Activated CD4-positive, alpha-beta memory T cell treated with anti-CD3 and anti-CD28 coated beads, Interleukin-2, amount 10 ng/mL, durations not matched to agents 7 days and 5 days (primary cell): ENCODE measurements at regions of chr18 and their contacts with region 1.

Region 1: GRCh38 chr18:13611601-13612195 is 114.7 kb downstream of the FAM210A start:
- DNase-seq: peak; percentile 32
- H3K4me3 Mint-ChIP-seq: peak overlapping the region; percentile 69
- H3K27ac Mint-ChIP-seq: peak overlapping the region; percentile 96
- H3K4me1 Mint-ChIP-seq: peaks cover 92% of the 10 kb centered on the region
- H3K27me3 Mint-ChIP-seq: no peaks in the 10 kb centered on the region

Region 2: GRCh38 chr18:13216092-13216582 is 395.6 kb before region 1 on chr18:
- CTCF ChIA-PET with region 1: interaction called, 11 read pairs
- POLR2A ChIA-PET with region 1: interaction called, 3 read pairs
- DNase-seq: peak; percentile 60
- H3K4me3 Mint-ChIP-seq: peak overlapping the region; percentile 71
- H3K27ac Mint-ChIP-seq: peak overlapping the region; percentile 14
- H3K4me1 Mint-ChIP-seq: peaks cover 20% of the 10 kb centered on the region
- H3K27me3 Mint-ChIP-seq: peaks cover 56% of the 10 kb centered on the region

Region 3: GRCh38 chr18:13558124-13558523 is 53.6 kb before region 1 on chr18:
- CTCF ChIA-PET with region 1: interaction called, 31 read pairs
- POLR2A ChIA-PET with region 1: interaction called, 14 read pairs
- DNase-seq: peak; percentile 33
- H3K4me3 Mint-ChIP-seq: no peak overlapping the region
- H3K27ac Mint-ChIP-seq: no peak overlapping the region
- H3K4me1 Mint-ChIP-seq: peaks cover 22% of the 10 kb centered on the region
- H3K27me3 Mint-ChIP-seq: no peaks in the 10 kb centered on the region

Region 4: DNA sequence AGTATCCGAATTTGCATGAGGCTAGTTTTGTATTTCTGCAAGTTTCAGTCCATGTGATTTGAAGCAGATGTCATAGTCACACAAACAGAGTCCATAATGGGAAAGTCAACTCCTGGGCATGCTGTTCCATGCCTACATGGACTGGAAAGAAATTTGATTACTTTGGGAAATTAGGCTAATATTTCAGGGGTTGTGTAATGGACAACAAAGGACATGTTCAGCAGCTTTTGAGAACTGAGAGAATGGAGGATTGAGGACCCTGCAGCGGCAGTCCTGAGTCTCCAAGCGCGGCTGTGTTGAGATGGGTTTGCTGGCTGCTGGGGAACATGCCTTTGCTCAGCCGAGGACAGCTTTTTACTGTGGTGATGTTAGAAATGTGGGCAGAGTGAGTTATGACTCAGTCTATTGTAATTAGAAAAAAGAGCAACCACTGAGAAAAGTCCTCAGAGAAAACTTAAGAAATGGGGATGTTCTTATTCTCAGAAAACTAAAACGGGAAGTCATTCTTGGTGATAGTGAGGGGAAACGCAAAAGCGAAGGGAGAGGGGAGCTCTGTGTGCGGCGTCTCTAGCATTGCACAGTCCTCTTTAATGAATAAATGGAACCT is 34.5 kb before region 1 on chr18:
- CTCF ChIA-PET with region 1: interaction called, 21 read pairs
- POLR2A ChIA-PET with region 1: interaction called, 76 read pairs
- DNase-seq: peak; percentile 58
- H3K4me3 Mint-ChIP-seq: peak overlapping the region; percentile 50
- H3K27ac Mint-ChIP-seq: peak overlapping the region; percentile 86
- H3K4me1 Mint-ChIP-seq: peaks cover 58% of the 10 kb centered on the region
- H3K27me3 Mint-ChIP-seq: no peaks in the 10 kb centered on the region

Region 5: GRCh38 chr18:13597068-13597467 is 14.6 kb before region 1 on chr18:
- CTCF ChIA-PET with region 1: interaction called, 4 read pairs
- POLR2A ChIA-PET with region 1: interaction called, 10 read pairs
- DNase-seq: no peak
- H3K4me3 Mint-ChIP-seq: no peak overlapping the region
- H3K27ac Mint-ChIP-seq: no peak overlapping the region
- H3K4me1 Mint-ChIP-seq: peaks cover 8% of the 10 kb centered on the region
- H3K27me3 Mint-ChIP-seq: no peaks in the 10 kb centered on the region